ENCODE measurements at regions of chr7 and their contacts with region 1.

Region 1: DNA sequence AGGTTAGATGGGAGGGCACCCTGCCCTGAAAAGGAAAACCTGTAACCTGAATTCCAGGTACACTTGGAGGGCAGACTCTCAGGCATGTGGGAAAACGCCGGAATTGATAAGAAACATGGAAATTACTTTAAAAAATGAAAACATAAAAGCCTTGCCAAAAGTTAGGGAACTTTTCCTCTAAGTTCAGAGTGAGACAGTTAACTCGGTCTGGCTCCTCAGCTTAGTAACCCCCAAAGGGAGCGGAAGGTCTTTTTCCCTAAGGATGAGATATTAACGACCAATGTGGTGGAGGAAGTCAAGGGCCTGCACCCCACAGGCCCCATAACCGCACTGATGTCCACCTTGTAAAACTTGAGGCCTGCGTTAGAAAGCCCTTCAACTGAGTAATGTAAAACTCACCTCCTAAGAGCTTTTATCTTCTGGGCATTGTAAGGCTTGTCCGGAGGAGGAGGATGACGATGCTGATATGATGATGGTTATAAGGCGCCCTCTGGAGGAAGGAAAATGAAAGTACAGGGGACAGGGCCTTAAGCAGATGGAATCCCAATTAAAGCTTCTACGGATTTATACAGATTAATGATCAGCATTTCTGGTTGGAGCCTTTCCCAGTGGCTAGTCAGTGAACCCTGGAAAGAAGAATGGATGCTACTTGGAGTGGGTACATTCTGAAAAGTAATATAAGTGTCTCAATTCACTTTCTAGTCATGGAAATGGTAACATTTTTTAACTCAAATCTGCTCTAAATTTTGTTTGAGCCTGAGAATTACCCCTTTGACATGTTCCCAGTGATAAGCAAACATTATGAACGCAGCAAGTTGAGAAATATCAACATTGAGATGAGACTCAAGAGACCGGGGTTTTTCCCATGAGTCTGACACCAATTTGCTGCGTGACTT is 694 bp downstream of the COL1A2 start:
- DNase-seq: peak; percentile 64
- H3K4me3 ChIP-seq: peak overlapping the region; percentile 96
- H3K27ac ChIP-seq: peak overlapping the region; percentile 98
- H3K27me3 ChIP-seq: no peaks in the 10 kb centered on the region
- CTCF ChIP-seq: peak; percentile 77

Region 2: DNA sequence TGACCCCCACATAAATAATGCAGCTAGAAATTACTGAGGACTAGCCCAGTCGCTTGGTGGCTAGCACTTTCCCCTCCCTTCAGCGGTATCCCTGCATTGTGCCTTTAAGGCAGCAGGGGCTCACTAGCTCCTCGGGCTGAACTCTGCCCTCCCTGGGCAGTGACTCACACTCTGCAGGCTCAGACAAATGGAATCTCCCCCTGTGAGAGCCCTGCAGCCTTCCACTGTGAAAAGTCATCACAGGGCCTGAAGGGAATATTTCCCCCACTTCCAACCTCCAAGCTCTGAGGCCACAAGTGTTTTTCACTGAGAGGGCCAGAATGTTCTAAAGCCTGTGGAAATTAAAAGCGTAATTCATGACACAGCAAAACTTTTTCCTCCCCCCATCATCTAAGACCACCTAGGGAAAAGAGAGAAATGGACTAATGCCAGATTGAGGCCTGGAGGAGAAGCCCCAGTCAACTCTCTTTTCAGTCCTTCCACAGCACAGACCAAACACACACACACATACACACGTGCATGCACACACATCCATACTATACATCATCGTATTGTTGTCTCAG is 94.3 kb before region 1 on chr7:
- CTCF ChIA-PET with region 1: interaction called, 482 read pairs
- POLR2A ChIA-PET with region 1: interaction called, 450 read pairs
- DNase-seq: peak; percentile 94
- H3K4me3 ChIP-seq: peak overlapping the region; percentile 44
- H3K27ac ChIP-seq: peak overlapping the region; percentile 98
- H3K27me3 ChIP-seq: no peaks in the 10 kb centered on the region
- CTCF ChIP-seq: peak; percentile 40

Region 3: DNA sequence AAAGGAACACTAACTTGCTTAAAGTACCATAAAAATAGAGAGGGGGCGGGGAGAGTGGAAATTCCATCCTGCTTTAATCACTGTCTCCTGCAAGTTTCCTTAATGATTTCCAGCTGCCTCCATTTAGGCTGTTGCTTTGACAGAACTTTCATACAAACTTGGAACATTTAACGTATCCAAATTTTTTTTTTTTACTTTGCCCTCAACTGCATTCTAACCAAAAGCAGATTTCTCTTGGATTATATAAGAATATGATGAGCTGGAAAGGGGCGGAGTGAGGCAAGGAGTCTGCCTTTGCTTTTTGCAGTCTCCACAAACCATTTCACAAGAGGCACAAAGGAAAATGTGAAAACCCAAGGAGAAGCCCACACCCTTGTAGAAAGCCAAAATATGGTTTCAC is 47.2 kb before region 1 on chr7:
- CTCF ChIA-PET with region 1: interaction called, 6 read pairs
- POLR2A ChIA-PET with region 1: interaction called, 11 read pairs
- DNase-seq: peak; percentile 85
- H3K4me3 ChIP-seq: peak overlapping the region; percentile 14; the same call in 1 of the 2 replicates
- H3K27ac ChIP-seq: peak overlapping the region; percentile 25
- H3K27me3 ChIP-seq: no peaks in the 10 kb centered on the region
- CTCF ChIP-seq: no peak

Region 4: DNA sequence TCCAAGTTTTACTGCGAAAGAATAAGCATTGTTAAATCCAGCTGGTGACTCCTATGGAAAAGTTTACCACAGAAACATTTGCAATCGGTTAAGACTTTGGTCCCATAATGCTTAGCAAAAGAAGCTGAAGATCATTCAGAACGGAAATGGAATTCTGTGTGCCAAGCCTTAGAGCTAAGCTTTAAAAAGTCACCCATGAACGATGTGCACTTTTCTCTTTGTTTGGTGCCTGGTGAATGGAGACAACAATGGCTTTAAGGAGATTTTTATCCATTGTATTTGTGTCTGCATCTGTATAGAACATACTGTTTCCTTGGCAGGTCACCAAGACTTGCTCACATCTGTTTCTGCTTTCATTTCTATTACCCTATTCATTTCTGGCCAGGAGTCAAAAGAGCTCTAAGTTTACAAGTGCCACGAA is 27.0 kb before region 1 on chr7:
- CTCF ChIA-PET with region 1: interaction called, 13 read pairs
- POLR2A ChIA-PET with region 1: interaction called, 59 read pairs
- DNase-seq: peak; percentile 76
- H3K4me3 ChIP-seq: peak overlapping the region; percentile 36
- H3K27ac ChIP-seq: peak overlapping the region; percentile 87
- H3K27me3 ChIP-seq: no peaks in the 10 kb centered on the region
- CTCF ChIP-seq: no peak

Region 5: DNA sequence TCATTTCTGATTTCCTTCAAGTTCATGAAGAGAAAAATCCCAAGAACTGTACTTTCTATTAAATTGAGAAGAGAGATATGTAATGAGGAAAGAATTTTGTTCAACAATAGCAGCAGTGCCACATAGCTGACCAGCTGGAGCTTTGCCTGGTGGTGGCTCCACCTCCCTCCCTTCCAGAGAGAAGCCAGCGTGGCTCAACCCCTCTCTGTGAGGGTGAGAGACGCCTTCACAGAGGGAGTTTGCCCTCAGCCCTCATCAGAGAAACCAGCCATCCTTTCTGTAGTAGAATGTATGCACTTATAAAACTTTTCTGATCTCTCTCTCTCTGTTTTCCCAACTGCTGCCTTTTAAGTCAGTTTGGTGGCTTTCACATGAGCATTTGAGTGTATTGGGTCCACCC is 21.2 kb before region 1 on chr7:
- CTCF ChIA-PET with region 1: interaction called, 17 read pairs
- POLR2A ChIA-PET with region 1: interaction called, 136 read pairs
- DNase-seq: peak; percentile 87
- H3K4me3 ChIP-seq: peak overlapping the region; percentile 50
- H3K27ac ChIP-seq: peak overlapping the region; percentile 93
- H3K27me3 ChIP-seq: no peaks in the 10 kb centered on the region
- CTCF ChIP-seq: peak; percentile 14; the same call in 1 of the 2 replicates

Region 6: GRCh38 chr7:94618126-94618525 is 222.7 kb after region 1 on chr7:
- CTCF ChIA-PET with region 1: no interaction called
- POLR2A ChIA-PET with region 1: no interaction called
- DNase-seq: no peak
- H3K4me3 ChIP-seq: no peak overlapping the region
- H3K27ac ChIP-seq: no peak overlapping the region
- H3K27me3 ChIP-seq: no peaks in the 10 kb centered on the region
- CTCF ChIP-seq: no peak

Measured in AG04450 (cell line).